Gastrocnemius medialis (tissue), 4 donors: ENCODE measurements at regions of chrX and their contacts with region 1.

Region 1: DNA sequence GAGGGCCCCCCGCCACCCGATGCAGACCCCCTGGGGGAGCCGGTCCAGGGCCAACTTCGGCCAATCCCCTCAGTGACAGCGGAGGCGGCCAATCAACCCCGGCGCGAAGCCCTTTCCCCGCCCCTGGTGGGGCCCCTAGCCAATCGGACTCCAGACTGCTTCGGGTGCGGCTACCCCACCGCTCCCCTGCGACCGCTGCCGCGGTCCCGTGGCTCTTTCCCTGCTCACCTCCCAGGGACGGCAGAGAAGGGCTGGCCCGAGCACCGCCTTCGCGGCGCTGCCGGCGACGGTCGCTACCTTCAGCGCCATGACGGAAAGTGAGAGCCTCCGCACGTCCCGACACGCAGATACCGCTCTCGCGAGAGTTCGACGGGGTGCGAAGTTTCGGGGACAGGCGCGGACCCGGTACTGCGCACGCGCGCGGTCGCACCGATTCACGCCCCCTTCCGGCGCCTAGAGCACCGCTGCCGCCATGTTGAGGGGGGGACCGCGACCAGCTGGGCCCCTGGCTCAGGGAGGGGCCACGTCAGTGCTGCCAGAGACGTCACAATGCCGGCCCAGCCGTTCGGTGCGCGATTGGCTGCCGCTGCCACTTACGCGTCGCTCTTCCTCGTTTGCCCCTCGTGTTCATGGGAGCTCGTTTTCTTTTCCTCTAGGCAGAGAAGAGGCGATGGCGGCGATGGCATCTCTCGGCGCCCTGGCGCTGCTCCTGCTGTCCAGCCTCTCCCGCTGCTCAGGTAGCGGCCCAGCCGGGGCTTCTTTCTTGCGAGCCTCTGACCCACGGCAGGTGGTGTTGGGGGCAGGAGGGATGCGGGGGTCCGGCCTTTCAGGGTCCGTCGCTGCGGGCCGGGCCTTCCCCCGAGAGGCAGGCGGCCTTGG is at the starts of genes IDH3G and SSR4:
- DNase-seq: peak; percentile 82 to 90
- ATAC-seq: peak; percentile 86 to 89
- H3K4me3 ChIP-seq: peak within 1 kb of the TSS; percentile 73 to 88 (median 78)
- H3K27ac ChIP-seq: peak within 1 kb of the TSS; percentile 93 to 98 (median 96)
- H3K4me1 ChIP-seq: peaks cover 6 to 16% of the 10 kb centered on the region in 2 donors
- H3K27me3 ChIP-seq: no peaks in the 10 kb centered on the region
- CTCF ChIP-seq: no peak
- POLR2A ChIP-seq: peak; percentile 60 to 74
- total RNA-seq, gene IDH3G: 79.8 to 92.7 (median 86.4) TPM
- total RNA-seq, gene SSR4: 73.9 to 111 (median 93.4) TPM

Region 2: GRCh38 chrX:153687121-153688039 is 106.9 kb before region 1 on chrX and contains the start of gene SLC6A8:
- in situ Hi-C with region 1: no loop called
- intact Hi-C with region 1: loop called (anchors 10 kb)
- DNase-seq: peak; percentile 61 to 74
- ATAC-seq: peak; percentile 40 to 44
- H3K4me3 ChIP-seq: peak within 1 kb of the TSS; percentile 47 to 56 (median 49)
- H3K27ac ChIP-seq: peak within 1 kb of the TSS; percentile 85 to 91 (median 88)
- H3K4me1 ChIP-seq: peaks cover 0 to 27% of the 10 kb centered on the region in 2 donors
- H3K27me3 ChIP-seq: no peaks in the 10 kb centered on the region
- CTCF ChIP-seq: peak in 4 of 5 experiments; percentile 38 to 60 (median 49)
- POLR2A ChIP-seq: peak; percentile 70 to 71
- total RNA-seq, gene SLC6A8: 40.1 to 78.1 (median 45.0) TPM

Region 3: DNA sequence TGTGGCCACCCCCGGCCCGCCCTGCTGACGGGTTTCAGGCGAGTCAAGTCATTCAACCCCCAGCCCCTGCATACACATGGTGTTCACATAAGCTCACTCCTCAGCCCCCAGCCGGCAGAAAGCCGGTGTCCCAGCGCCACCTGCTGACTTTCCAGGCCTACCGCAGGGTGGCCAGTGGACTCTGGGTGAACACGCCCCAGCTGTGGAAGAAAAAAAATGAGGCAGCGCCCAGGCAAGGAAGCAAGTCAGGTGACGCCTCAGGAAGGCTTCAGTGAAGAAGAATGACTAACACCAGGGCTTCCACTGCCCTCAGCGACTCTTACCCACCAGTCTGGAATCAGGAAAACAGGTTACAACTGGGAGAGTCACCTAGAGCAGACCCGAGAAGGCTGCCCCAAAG is 85.8 kb before region 1 on chrX:
- in situ Hi-C with region 1: no loop called
- intact Hi-C with region 1: no loop called
- DNase-seq: peak; percentile 70 to 87
- ATAC-seq: peak; percentile 49 to 62
- H3K4me3 ChIP-seq: no peak overlapping the region
- H3K27ac ChIP-seq: peak overlapping the region; percentile 85 to 91 (median 90)
- H3K4me1 ChIP-seq: peaks cover 17 to 44% of the 10 kb centered on the region in 2 donors
- H3K27me3 ChIP-seq: no peaks in the 10 kb centered on the region
- CTCF ChIP-seq: peak; percentile 58 to 80 (median 72)
- POLR2A ChIP-seq: no peak

Region 4: DNA sequence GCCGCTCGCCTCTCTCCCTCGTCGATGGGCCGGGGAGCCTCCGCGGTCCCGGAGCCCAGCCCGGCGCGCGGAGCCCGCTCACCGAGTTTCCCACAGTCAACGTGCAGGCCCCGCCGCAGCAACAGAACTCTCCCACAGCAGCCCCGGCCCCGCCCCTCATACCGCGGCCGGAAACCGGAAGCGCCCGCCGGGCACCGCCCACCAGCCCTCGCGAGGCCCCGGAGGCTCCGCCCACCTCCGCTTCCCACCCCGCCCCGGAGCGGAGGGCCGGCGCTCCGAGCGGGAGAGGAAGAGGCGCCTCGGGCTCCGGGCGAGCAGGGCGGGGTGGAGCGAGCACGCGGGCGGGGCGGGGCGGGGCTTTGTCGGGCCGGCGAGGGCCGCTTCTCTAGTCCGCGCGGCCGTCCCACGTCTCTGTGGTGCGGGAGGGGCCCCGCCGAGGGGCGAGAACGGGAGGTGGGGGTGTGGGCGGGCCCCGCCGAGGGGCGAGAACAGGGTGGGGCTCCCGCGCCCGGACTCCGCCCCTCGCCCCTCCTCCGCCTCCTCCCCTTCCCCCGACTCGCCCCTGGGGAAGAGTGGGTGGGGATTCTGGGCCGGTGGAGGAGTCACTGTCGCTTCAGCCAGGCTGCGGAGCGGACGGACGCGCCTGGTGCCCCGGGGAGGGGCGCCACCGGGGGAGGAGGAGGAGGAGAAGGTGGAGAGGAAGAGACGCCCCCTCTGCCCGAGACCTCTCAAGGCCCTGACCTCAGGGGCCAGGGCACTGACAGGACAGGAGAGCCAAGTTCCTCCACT is 69.8 kb before region 1 on chrX and contains the starts of genes ABCD1 and BCAP31:
- in situ Hi-C with region 1: no loop called
- intact Hi-C with region 1: loop called (anchors 1 kb)
- DNase-seq: peak; percentile 84 to 86
- ATAC-seq: peak; percentile 56 to 68
- H3K4me3 ChIP-seq: peak within 1 kb of the TSS; percentile 66 to 75 (median 66)
- H3K27ac ChIP-seq: peak within 1 kb of the TSS; percentile 89 to 95 (median 92)
- H3K4me1 ChIP-seq: peaks cover 31 to 48% of the 10 kb centered on the region in 2 donors
- H3K27me3 ChIP-seq: no peaks in the 10 kb centered on the region
- CTCF ChIP-seq: no peak
- POLR2A ChIP-seq: peak; percentile 80 to 88
- total RNA-seq, gene ABCD1: 19.9 to 54.6 (median 34.5) TPM
- total RNA-seq, gene BCAP31: 41.5 to 91.9 (median 48.3) TPM

Region 5: DNA sequence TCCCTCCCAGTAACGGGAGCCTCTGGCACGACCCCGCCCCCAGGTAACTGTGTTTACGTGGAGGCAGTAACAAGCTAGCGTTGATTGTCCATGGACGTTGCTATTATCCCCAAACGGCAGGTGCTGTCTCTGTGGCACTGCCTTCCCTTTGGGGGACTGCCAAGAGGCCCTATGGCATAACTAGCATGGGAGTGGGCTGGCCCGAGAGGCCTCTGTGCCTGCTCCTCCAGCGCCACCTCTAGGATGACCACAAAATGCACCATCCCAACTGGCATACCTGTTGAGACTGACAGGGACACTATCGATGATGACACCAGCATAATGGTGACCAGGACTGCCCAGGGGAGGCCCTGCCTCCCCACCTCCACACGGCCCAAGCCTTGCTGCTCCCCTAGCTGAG is 11.9 kb before region 1 on chrX:
- in situ Hi-C with region 1: no loop called
- intact Hi-C with region 1: loop called (anchors 1 kb)
- DNase-seq: peak; percentile 30 to 81
- ATAC-seq: peak; percentile 35 to 65
- H3K4me3 ChIP-seq: peak overlapping the region in 1 of 4 donors; percentile 52
- H3K27ac ChIP-seq: peak overlapping the region; percentile 88 to 94 (median 90)
- H3K4me1 ChIP-seq: peaks cover 0 to 30% of the 10 kb centered on the region in 2 donors
- H3K27me3 ChIP-seq: no peaks in the 10 kb centered on the region
- CTCF ChIP-seq: peak in 3 of 5 experiments; percentile 13 to 44 (median 26)
- POLR2A ChIP-seq: no peak

Region 6: GRCh38 chrX:153927922-153928760 is 133.9 kb after region 1 on chrX:
- in situ Hi-C with region 1: loop called in 1 of 4 experiments (anchors 25 kb)
- intact Hi-C with region 1: loop called (anchors 1 kb)
- DNase-seq: peak; percentile 91 to 96
- ATAC-seq: peak; percentile 89
- H3K4me3 ChIP-seq: peak overlapping the region; percentile 55 to 74 (median 68)
- H3K27ac ChIP-seq: peak overlapping the region; percentile 85 to 97 (median 90)
- H3K4me1 ChIP-seq: peaks cover 10 to 17% of the 10 kb centered on the region in 2 donors
- H3K27me3 ChIP-seq: no peaks in the 10 kb centered on the region
- CTCF ChIP-seq: peak in 4 of 5 experiments; percentile 24 to 27 (median 25)
- POLR2A ChIP-seq: peak; percentile 88 to 92

Region 7: DNA sequence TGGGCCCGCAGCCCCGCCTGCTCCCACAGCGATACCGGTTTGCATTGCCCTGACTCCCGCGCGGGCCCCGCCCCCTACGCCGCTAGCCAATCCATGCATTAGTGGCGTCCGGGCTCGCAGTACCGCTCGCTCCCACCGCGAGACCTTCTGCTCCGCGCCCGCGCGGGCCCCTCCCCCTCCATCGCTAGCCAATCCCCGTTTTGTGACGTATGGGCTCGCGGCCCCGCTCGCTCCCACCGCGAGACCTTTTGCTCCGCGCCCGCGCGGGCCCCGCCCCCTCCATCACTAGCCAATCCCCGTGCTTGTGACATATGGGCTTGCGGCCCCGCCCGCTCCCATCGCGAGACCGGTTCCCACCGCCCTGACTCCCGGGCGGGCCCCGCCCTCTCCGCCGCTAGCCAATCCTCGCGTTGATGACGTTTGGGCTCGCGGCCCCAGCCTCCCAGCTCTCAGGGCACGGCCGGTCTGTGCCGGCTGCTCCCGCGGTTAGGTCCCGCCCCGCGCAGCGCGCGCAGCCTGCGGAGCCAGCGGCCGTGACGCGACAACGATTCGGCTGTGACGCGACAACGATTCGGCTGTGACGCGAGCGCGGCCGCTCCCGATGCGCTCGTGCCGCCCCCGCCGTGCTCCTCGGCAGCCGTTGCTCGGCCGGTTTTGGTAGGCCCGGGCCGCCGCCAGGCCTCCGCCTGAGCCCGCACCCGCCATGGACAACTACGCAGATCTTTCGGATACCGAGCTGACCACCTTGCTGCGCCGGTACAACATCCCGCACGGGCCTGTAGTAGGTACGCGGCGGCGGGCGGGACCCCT is 584.7 kb after region 1 on chrX and contains the start of gene EMD:
- in situ Hi-C with region 1: no loop called
- intact Hi-C with region 1: loop called (anchors 10 kb)
- DNase-seq: peak; percentile 95 to 98
- ATAC-seq: peak; percentile 79 to 84
- H3K4me3 ChIP-seq: peak within 1 kb of the TSS; percentile 67 to 84 (median 69)
- H3K27ac ChIP-seq: peak within 1 kb of the TSS; percentile 87 to 99 (median 96)
- H3K4me1 ChIP-seq: peaks cover 5 to 13% of the 10 kb centered on the region in 2 donors
- H3K27me3 ChIP-seq: no peaks in the 10 kb centered on the region
- CTCF ChIP-seq: peak in 1 of 5 experiments; percentile 5
- POLR2A ChIP-seq: peak; percentile 89 to 93
- total RNA-seq, gene EMD: 36.2 to 61.5 (median 53.2) TPM